Transverse colon (tissue), 4 donors: ENCODE measurements at regions of chr12 and their contacts with region 1.

Region 1: GRCh38 chr12:111024205-111024801 is 103.9 kb upstream of the MYL2 start:
- DNase-seq: peak; percentile 48
- H3K4me3 ChIP-seq: no peak overlapping the region
- H3K27ac ChIP-seq: no peak overlapping the region
- H3K4me1 ChIP-seq: no peaks in the 10 kb centered on the region
- H3K27me3 ChIP-seq: peaks cover 50% of the 10 kb centered on the region
- CTCF ChIP-seq: peak; percentile 60 to 71 (median 68)
- EP300 ChIP-seq: no peak
- POLR2A ChIP-seq: no peak

Region 2: DNA sequence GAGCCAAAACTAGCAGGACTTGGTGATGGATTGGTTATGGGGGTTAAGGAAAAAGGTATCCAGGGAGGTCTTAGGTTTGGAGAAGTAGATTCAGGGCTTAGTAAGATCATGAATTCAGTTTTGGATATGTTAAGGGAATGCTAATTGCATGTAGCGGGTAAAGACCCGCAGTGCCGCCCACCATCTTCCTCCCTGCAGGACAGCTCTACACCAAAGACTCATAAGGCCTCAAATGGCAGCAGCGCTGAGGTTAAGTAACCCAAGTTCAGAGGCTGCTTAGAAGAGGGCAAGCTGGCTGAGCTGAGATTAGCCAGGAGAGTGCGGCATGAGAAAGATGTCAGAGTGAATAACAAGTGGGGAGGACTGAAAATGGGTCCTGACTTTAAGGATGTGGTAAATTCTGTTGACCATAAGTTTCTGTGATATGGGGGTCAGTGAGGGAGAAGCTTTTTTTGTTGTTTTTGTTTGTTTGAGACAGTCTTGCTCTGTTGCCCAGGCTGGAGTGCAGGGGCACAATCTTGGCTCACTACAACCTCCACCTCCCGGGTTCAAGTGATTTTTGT is 495.9 kb before region 1 on chr12:
- in situ Hi-C with region 1: no loop called
- intact Hi-C with region 1: no loop called
- DNase-seq: no peak
- H3K4me3 ChIP-seq: no peak overlapping the region
- H3K27ac ChIP-seq: no peak overlapping the region
- H3K4me1 ChIP-seq: peaks cover 14 to 25% (median 19%) of the 10 kb centered on the region in 4 donors
- H3K27me3 ChIP-seq: no peaks in the 10 kb centered on the region
- CTCF ChIP-seq: no peak
- EP300 ChIP-seq: no peak
- POLR2A ChIP-seq: no peak

Region 3: GRCh38 chr12:110957652-110958051 is 66.7 kb before region 1 on chr12:
- in situ Hi-C with region 1: no loop called
- intact Hi-C with region 1: loop called (anchors 2 kb)
- DNase-seq: no peak
- H3K4me3 ChIP-seq: no peak overlapping the region
- H3K27ac ChIP-seq: no peak overlapping the region
- H3K4me1 ChIP-seq: no peaks in the 10 kb centered on the region
- H3K27me3 ChIP-seq: peaks cover 13% of the 10 kb centered on the region
- CTCF ChIP-seq: no peak
- EP300 ChIP-seq: no peak
- POLR2A ChIP-seq: no peak

Region 4: DNA sequence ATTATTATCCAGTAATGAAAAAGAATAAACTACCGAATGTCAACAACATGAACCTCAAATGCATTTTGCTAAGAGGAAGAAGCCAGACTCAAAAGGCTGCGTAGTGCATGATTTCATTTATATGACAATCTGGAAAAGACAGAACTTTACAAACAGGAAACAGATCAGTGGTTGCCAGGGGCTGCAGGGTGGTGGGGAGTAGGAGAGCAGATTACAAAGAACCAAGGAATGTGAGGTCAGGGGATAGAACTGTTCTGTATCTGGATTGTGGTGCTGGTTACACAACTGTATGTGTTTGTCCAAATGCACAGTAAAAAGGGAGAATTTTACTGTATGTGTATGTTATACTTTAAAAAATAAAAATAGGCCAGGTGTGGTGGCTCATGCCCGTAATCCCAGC is 14.2 kb before region 1 on chr12:
- in situ Hi-C with region 1: no loop called
- intact Hi-C with region 1: no loop called
- DNase-seq: no peak
- H3K4me3 ChIP-seq: no peak overlapping the region
- H3K27ac ChIP-seq: no peak overlapping the region
- H3K4me1 ChIP-seq: no peaks in the 10 kb centered on the region
- H3K27me3 ChIP-seq: peaks cover 19% of the 10 kb centered on the region
- CTCF ChIP-seq: no peak
- EP300 ChIP-seq: no peak
- POLR2A ChIP-seq: no peak

Region 5: GRCh38 chr12:111227476-111228420 is 203.4 kb after region 1 on chr12:
- in situ Hi-C with region 1: no loop called
- intact Hi-C with region 1: no loop called
- DNase-seq: no peak
- H3K4me3 ChIP-seq: no peak overlapping the region
- H3K27ac ChIP-seq: no peak overlapping the region
- H3K4me1 ChIP-seq: no peaks in the 10 kb centered on the region
- H3K27me3 ChIP-seq: no peaks in the 10 kb centered on the region
- CTCF ChIP-seq: no peak
- EP300 ChIP-seq: no peak
- POLR2A ChIP-seq: no peak

Region 6: GRCh38 chr12:111304642-111305071 is 280.4 kb after region 1 on chr12:
- in situ Hi-C with region 1: loop called in 3 of 4 experiments (anchors 25 kb)
- intact Hi-C with region 1: loop called (anchors 5 kb)
- DNase-seq: no peak
- H3K4me3 ChIP-seq: no peak overlapping the region
- H3K27ac ChIP-seq: no peak overlapping the region
- H3K4me1 ChIP-seq: no peaks in the 10 kb centered on the region
- H3K27me3 ChIP-seq: no peaks in the 10 kb centered on the region
- CTCF ChIP-seq: peak in 4 of 5 experiments; percentile 36 to 57 (median 45)
- EP300 ChIP-seq: no peak
- POLR2A ChIP-seq: no peak